Caco-2 (cell line): ENCODE measurements at regions of chr13 and their contacts with region 1.

Region 1: DNA sequence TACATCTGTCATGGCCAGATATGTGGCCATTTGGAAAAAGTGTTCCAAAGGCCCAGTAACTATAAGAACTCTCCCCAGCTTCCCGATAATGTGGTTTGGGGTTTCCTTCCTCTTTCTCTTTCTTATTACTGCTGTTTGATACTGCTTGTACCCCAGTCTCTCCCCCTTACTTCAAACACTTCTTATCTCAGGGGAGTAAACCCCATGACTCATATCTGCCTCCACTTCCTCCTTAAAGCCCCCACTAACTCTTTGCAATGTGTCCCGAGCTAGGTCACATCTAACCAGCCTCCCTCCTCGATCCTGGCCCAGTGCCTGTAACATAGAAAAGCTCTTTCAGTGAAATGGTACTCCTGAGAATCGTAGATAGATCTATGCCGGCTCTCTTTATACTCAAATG is 82.4 kb upstream of the STARD13 start:
- DNase-seq: no peak
- H3K4me3 ChIP-seq: no peak overlapping the region
- H3K4me3 Mint-ChIP-seq: no peak overlapping the region
- H3K27ac Mint-ChIP-seq: no peak overlapping the region
- H3K4me1 ChIP-seq: peaks cover 33% of the 10 kb centered on the region
- H3K4me1 Mint-ChIP-seq: peaks cover 26% of the 10 kb centered on the region
- H3K27me3 ChIP-seq: no peaks in the 10 kb centered on the region
- H3K27me3 Mint-ChIP-seq: no peaks in the 10 kb centered on the region
- CTCF ChIP-seq: no peak

Region 2: GRCh38 chr13:33446821-33447725 is 79.1 kb after region 1 on chr13:
- CTCF ChIA-PET with region 1: no interaction called
- POLR2A ChIA-PET with region 1: no interaction called
- intact Hi-C with region 1: loop called (anchors 5 kb)
- DNase-seq: peak; percentile 10 to 50
- H3K4me3 ChIP-seq: no peak overlapping the region
- H3K4me3 Mint-ChIP-seq: no peak overlapping the region
- H3K27ac Mint-ChIP-seq: no peak overlapping the region
- H3K4me1 ChIP-seq: peaks cover 8% of the 10 kb centered on the region; the same call in 1 of the 2 replicates
- H3K4me1 Mint-ChIP-seq: no peaks in the 10 kb centered on the region
- H3K27me3 ChIP-seq: no peaks in the 10 kb centered on the region
- H3K27me3 Mint-ChIP-seq: peaks cover 3% of the 10 kb centered on the region
- CTCF ChIP-seq: no peak